Sciatic nerve (tissue), 2 donors: ENCODE measurements at regions of chr1 and their contacts with region 1.

Region 1: DNA sequence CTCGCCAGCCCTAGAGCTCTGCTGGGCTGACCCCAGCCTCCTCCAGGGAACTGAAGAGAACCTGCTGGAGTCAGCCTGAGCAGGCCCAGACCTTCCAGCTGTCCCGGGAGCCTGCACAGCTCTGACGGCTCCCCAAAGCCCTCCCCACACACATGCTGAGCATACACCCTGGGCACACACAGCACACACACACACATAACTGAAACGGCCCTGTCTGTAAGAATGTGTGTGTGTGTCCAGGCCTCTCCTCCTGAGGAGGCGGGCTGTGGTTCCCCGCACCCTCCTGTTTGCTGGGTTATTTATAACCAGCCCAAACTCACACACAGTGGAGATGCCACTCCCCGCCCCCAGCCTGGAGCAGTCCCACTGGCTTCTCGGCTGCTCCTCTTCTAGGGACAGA is 20.2 kb downstream of the SDC3 start:
- DNase-seq: no peak
- ATAC-seq: peak; percentile 81

Region 2: DNA sequence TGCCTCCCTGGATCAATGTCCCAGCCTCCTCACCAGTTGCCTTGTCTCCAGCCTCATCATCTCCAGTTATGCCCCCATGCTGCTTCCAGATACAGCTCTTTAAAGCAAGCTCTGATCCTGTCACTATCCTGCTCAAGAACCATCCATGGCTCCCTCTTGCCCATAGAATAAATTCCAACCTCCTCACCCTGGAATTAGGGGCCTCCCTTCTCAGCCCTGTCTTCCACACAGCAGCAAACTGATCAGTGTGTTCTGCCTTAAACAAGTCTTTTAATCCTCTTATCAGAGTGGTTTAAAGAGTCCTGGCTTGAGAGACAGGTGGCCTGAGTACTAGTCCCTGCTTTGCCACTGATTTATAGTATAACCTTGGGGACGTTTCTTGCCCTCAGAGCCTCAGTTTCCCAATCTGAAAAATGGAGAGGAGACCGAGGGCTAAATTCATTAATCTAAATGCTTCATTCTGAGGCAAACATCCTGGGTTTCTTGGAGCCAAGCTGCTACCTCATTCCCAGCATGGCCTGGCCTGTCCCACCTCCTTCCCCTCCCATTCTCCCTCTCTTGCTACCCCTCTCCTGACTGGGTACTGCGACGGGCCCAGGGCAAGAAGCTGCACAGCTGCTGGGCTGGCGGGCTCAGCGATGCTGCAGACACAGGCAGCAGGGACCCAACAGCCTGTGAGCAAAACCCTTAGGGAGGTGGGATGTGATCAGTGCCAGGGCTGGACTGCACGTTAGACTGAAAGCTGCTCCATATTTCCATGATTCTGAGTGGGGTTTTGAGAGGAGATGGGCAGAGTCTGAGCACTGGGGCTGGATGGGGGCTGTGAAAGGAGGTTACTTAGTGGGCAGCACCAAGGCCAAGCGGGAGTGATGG is 1430.7 kb before region 1 on chr1:
- intact Hi-C with region 1: loop called (anchors 5 kb)
- DNase-seq: no peak
- ATAC-seq: no peak